Psoas muscle (tissue), 8 donors: ENCODE measurements at regions of chr12 and their contacts with region 1.

Region 1: DNA sequence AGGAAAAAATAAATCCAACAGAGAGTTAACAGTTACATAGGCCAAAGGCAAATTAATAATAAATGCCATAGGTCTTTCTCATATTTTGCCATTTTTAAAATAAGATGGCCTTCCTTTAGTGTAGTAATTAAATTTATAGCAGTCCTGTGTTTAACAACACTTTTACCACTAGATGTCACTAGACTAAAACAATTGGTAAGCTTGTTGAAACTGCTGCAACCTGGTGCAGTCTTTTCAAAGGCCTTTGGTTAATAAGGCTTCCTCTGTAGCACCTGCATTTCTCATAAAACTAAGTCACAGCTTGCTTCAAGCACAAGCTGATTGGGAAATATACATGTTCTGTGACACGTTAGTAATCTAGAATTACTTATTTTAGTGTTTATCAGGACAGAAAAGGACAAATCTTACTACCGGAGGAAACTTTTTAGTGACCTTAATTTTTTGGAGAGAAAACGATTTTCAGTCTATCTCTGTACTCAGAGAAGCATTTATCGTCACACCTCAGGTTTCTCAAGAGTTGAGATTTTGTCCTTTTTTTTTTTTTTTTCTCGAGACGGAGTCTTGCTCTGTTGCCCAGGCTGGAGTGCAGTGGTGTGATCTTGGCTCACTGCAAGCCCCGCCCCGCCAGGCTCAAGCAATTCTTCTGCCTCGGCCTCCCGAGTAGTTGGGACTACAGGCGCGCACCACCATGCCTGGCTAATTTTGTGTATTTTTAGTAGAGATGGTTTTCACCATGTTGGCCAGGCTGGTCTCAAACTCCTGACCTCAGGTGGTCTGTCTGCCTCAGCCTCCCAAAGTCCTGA is 20.0 kb downstream of the BORCS5 start:
- DNase-seq: no peak
- ATAC-seq: peak; percentile 76 to 92 (median 82)
- H3K4me3 ChIP-seq: no peak overlapping the region
- H3K27ac ChIP-seq: no peak overlapping the region
- H3K4me1 ChIP-seq: peaks cover 5% of the 10 kb centered on the region
- H3K27me3 ChIP-seq: no peaks in the 10 kb centered on the region
- CTCF ChIP-seq: peak; percentile 79

Region 2: GRCh38 chr12:12654691-12655460 is 278.0 kb after region 1 on chr12:
- intact Hi-C with region 1: loop called (anchors 5 kb)
- DNase-seq: no peak
- ATAC-seq: no peak
- H3K4me3 ChIP-seq: no peak overlapping the region
- H3K27ac ChIP-seq: no peak overlapping the region
- H3K4me1 ChIP-seq: peaks cover 3% of the 10 kb centered on the region
- H3K27me3 ChIP-seq: no peaks in the 10 kb centered on the region
- CTCF ChIP-seq: no peak

Region 3: GRCh38 chr12:12704593-12705230 is 327.9 kb after region 1 on chr12:
- intact Hi-C with region 1: loop called (anchors 5 kb)
- DNase-seq: peak in 1 of 2 donors; percentile 64
- ATAC-seq: peak; percentile 99 to 100 (median 100)
- H3K4me3 ChIP-seq: no peak overlapping the region
- H3K27ac ChIP-seq: no peak overlapping the region
- H3K4me1 ChIP-seq: no peaks in the 10 kb centered on the region
- H3K27me3 ChIP-seq: no peaks in the 10 kb centered on the region
- CTCF ChIP-seq: peak; percentile 88